Tibial artery (tissue), 4 donors: ENCODE measurements at regions of chr6 and their contacts with region 1.

Region 1: DNA sequence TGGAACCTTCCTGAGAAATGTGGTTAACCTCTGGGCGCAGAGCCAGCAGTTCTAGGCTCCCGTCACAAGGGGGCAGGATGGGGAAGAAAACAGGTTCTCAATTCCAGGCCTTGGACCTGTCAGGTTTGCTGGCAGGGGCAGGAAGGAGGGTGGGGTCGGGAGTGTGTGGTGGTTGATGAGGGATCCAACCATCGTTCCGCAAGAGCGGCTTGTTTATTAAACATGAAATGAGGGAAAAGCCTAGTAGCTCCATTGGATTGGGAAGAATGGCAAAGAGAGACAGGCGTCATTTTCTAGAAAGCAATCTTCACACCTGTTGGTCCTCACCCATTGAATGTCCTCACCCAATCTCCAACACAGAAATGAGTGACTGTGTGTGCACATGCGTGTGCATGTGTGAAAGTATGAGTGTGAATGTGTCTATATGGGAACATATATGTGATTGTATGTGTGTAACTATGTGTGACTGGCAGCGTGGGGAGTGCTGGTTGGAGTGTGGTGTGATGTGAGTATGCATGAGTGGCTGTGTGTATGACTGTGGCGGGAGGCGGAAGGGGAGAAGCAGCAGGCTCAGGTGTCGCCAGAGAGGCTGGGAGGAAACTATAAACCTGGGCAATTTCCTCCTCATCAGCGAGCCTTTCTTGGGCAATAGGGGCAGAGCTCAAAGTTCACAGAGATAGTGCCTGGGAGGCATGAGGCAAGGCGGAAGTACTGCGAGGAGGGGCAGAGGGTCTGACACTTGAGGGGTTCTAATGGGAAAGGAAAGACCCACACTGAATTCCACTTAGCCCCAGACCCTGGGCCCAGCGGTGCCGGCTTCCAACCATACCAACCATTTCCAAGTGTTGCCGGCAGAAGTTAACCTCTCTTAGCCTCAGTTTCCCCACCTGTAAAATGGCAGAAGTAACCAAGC is 29.6 kb downstream of the SRSF3 start:
- DNase-seq: peak; percentile 89 to 94
- H3K4me3 ChIP-seq: no peak overlapping the region
- H3K27ac ChIP-seq: peak overlapping the region; percentile 71 to 76
- H3K4me1 ChIP-seq: peaks cover 0 to 49% (median 42%) of the 10 kb centered on the region in 4 donors
- H3K27me3 ChIP-seq: no peaks in the 10 kb centered on the region
- CTCF ChIP-seq: peak; percentile 83 to 89

Region 2: DNA sequence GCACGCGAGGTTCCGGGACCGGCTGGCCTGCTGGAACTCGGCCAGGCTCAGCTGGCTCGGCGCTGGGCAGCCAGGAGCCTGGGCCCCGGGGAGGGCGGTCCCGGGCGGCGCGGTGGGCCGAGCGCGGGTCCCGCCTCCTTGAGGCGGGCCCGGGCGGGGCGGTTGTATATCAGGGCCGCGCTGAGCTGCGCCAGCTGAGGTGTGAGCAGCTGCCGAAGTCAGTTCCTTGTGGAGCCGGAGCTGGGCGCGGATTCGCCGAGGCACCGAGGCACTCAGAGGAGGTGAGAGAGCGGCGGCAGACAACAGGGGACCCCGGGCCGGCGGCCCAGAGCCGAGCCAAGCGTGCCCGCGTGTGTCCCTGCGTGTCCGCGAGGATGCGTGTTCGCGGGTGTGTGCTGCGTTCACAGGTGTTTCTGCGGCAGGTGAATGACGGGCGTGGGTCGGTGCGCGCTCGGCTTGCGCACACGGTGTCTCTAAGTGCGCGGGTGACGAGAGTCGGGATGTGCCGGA is 54.8 kb after region 1 on chr6 and contains the start of gene CDKN1A:
- intact Hi-C with region 1: loop called (anchors 2 kb)
- DNase-seq: peak; percentile 93 to 98
- H3K4me3 ChIP-seq: peak within 1 kb of the TSS; percentile 95 to 99
- H3K27ac ChIP-seq: peak within 1 kb of the TSS; percentile 99 to 100
- H3K4me1 ChIP-seq: peaks cover 0 to 55% (median 41%) of the 10 kb centered on the region in 4 donors
- H3K27me3 ChIP-seq: no peaks in the 10 kb centered on the region
- CTCF ChIP-seq: peak in 1 of 2 experiments; percentile 31

Region 3: GRCh38 chr6:36731622-36732309 is 108.0 kb after region 1 on chr6:
- intact Hi-C with region 1: loop called (anchors 5 kb)
- DNase-seq: no peak
- H3K4me3 ChIP-seq: no peak overlapping the region
- H3K27ac ChIP-seq: no peak overlapping the region
- H3K4me1 ChIP-seq: peaks cover 0 to 25% (median 16%) of the 10 kb centered on the region in 4 donors
- H3K27me3 ChIP-seq: no peaks in the 10 kb centered on the region
- CTCF ChIP-seq: no peak

Region 4: GRCh38 chr6:36839749-36840431 is 216.1 kb after region 1 on chr6:
- intact Hi-C with region 1: loop called (anchors 10 kb)
- DNase-seq: no peak
- H3K4me3 ChIP-seq: peak overlapping the region; percentile 48 to 55
- H3K27ac ChIP-seq: peak overlapping the region in 1 of 2 donors; percentile 47
- H3K4me1 ChIP-seq: peaks cover 0 to 27% (median 23%) of the 10 kb centered on the region in 4 donors
- H3K27me3 ChIP-seq: no peaks in the 10 kb centered on the region
- CTCF ChIP-seq: peak; percentile 17 to 21